Activated naive CD4-positive, alpha-beta T cell treated with anti-CD3 and anti-CD28 coated beads for 36 hours (primary cell): ENCODE measurements at regions of chr5 and their contacts with region 1.

Region 1: DNA sequence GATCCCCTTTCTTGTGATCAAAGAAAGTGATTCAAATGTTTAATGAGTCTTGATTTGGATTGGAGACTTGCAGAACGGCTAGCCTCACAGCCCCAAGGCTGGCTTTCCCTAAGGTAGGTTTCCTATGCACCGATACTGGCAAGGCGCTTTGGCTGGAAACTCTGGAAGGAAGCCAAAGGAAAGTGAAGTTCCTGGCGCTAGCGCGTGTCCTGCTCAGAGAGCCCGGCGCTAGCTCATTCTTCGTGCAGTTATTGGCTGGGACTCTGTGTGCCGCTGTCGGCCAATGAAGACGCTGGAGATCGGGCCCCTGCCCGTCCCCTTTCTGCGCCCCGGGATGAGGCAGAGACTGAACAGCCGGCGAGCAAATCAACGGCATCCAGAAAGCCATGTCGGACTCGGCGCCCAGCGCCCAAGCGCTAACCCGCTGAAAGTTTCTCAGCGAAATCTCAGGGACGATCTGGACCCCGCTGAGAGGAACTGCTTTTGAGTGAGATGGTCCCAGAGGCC is at the start of gene PCDHGC3:
- DNase-seq: peak; percentile 72
- H3K4me3 Mint-ChIP-seq: peak within 1 kb of the TSS; percentile 86
- H3K27ac Mint-ChIP-seq: no peak within 1 kb of the TSS
- H3K4me1 Mint-ChIP-seq: peaks cover 20% of the 10 kb centered on the region
- H3K27me3 Mint-ChIP-seq: peaks cover 50% of the 10 kb centered on the region
- total RNA-seq, gene PCDHGC3: 0.12 to 0.17 TPM

Region 2: GRCh38 chr5:141420855-141421496 is 54.7 kb before region 1 on chr5 and contains the start of gene PCDHGA11:
- CTCF ChIA-PET with region 1: interaction called, 3 read pairs
- intact Hi-C with region 1: loop called (anchors 5 kb)
- DNase-seq: peak; percentile 71
- H3K4me3 Mint-ChIP-seq: peak within 1 kb of the TSS; percentile 77
- H3K27ac Mint-ChIP-seq: no peak within 1 kb of the TSS
- H3K4me1 Mint-ChIP-seq: peaks cover 3% of the 10 kb centered on the region
- H3K27me3 Mint-ChIP-seq: peaks cover 69% of the 10 kb centered on the region
- total RNA-seq, gene PCDHGA11: 0.10 to 0.17 TPM

Region 3: DNA sequence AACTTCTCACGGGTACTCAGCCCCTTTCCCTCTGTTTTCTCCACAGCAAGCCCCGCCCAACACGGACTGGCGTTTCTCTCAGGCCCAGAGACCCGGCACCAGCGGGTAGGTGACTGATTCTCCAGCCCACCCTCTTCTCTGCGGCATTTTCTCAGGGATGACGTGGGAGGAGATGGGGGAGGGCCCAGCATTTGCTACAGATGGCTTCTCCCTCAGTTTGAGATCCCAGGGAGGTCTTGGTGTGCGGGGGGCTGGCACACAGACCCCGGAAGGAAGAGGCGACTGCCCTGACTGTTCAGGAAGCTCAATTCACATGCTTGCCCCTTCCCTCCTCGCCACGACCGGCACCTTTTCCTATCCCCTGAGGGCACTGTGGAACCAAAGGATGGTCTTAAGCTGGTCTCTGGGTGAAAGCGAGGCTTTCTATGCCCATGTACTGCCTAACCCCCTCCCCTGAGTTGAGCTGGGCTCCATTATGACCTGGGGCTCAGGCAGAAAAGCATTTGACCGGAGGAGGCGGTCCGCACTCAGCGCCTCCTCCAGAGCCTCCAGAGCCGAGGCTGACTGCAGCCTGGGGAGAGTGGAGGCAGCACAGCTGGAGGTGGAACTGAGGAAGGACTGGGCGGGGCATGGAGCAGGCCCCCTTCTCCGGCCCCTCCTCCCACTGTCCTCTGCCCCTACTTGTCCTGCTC is 19.2 kb after region 1 on chr5:
- CTCF ChIA-PET with region 1: no interaction called
- intact Hi-C with region 1: no loop called
- DNase-seq: no peak
- H3K4me3 Mint-ChIP-seq: no peak overlapping the region
- H3K27ac Mint-ChIP-seq: no peak overlapping the region
- H3K4me1 Mint-ChIP-seq: peaks cover 5% of the 10 kb centered on the region
- H3K27me3 Mint-ChIP-seq: peaks cover 54% of the 10 kb centered on the region